ENCODE measurements at regions of chr22 and their contacts with region 1.

Region 1: DNA sequence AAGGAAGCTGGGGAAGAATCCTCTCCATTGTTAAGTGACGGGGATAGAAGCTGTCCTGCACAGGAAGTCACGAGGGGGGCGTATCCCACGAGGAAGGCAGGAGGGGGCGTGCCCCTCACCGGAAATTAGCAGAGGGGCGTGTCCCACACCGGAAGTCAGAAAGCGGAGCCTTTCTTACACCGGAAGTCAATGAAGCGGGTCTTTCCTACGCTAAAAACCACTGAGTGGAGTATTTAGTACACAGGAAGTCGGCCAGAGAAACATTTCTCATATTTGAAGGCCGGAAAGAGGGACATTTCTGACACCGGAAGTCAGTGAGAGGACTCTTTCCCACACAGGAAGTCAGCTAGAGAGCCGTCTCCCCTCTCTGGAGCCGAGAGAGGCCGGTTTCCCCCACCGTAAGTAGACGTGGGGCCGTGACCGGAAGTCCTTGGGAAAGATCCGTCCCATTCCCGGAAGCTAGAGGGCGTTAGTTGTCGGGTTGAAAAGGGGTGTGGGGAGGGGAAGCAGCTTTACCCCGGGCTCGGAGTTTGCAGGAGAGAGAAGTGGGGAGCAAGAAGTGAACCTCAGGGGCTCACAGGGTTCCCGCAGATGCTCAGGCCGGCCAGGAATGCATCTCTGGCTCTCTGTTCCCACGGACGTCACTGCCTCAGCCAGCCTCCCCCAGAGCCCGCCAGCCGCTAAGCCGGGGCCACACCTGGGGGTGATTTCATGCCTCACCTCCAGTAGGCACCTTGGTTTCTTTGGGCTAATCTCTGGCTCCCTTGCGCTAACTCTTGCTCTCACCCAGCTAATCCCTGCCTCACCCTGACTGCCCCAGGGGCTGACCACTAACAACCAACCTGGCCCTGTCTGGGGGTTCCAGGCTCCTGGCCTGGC is 15.4 kb downstream of the MIAT start:
- DNase-seq: peak; percentile 82
- ATAC-seq: peak; percentile 67
- H3K4me3 Mint-ChIP-seq: peak overlapping the region; percentile 98
- H3K27ac Mint-ChIP-seq: peak overlapping the region; percentile 99
- H3K4me1 Mint-ChIP-seq: peaks cover 92% of the 10 kb centered on the region
- H3K27me3 Mint-ChIP-seq: no peaks in the 10 kb centered on the region
- CTCF ChIP-seq: no peak

Region 2: GRCh38 chr22:26295563-26296126 is 377.2 kb before region 1 on chr22:
- CTCF ChIA-PET with region 1: no interaction called
- POLR2A ChIA-PET with region 1: interaction called, 5 read pairs
- intact Hi-C with region 1: loop called (anchors 2 kb)
- DNase-seq: no peak
- ATAC-seq: no peak
- H3K4me3 Mint-ChIP-seq: no peak overlapping the region
- H3K27ac Mint-ChIP-seq: peak overlapping the region; percentile 24
- H3K4me1 Mint-ChIP-seq: peaks cover 14% of the 10 kb centered on the region
- H3K27me3 Mint-ChIP-seq: peaks cover 2% of the 10 kb centered on the region
- CTCF ChIP-seq: no peak

Region 3: GRCh38 chr22:26511857-26512793 is 160.7 kb before region 1 on chr22 and contains the start of gene TFIP11:
- CTCF ChIA-PET with region 1: no interaction called
- POLR2A ChIA-PET with region 1: interaction called, 8 read pairs
- intact Hi-C with region 1: loop called (anchors 1 kb)
- DNase-seq: peak; percentile 89
- ATAC-seq: peak; percentile 94
- H3K4me3 Mint-ChIP-seq: peak within 1 kb of the TSS; percentile 100
- H3K27ac Mint-ChIP-seq: peak within 1 kb of the TSS; percentile 96
- H3K4me1 Mint-ChIP-seq: peaks cover 39% of the 10 kb centered on the region
- H3K27me3 Mint-ChIP-seq: no peaks in the 10 kb centered on the region
- CTCF ChIP-seq: no peak
- total RNA-seq, gene TFIP11: 59.0 and 62.8 TPM in 2 replicates

Region 4: DNA sequence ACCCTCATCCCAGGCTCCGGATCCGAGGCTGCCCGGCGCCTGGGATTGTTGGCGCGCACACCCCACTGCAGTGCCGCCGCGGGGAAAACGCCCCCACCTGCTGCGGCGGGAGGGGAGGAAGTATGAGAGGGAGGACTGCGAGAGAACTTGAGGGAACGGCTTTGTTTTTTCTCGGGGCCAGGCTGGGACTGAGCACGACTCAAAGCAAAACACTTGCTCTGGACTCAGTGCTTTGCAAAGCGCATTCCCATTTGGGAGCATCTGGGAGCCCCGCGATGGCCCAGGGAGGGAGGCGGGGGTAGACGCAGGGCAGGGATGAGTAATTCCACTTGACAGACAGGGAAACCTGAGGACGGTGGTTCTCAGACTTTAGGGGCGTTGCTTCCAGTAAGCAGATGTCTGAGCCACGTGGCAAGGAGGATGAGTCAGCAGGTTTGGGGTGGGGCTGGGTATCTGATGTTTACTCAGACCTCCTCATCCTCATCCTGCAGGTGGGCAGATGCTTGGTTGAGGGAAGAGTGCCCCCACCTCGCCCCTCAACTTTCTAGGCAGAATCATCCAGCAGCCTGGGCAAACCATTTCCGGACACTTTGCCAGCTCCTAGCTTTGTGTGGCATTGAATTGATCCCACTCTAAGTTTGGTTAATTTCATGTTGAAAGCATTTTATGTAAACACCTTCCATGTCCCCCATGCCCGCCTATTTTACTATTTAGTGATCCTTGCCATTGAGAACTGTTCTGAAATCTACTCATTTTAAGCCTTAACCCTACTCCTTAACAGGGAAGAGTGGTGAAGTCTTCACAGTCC is 14.0 kb before region 1 on chr22:
- CTCF ChIA-PET with region 1: interaction called, 3 read pairs
- POLR2A ChIA-PET with region 1: interaction called, 12 read pairs
- intact Hi-C with region 1: loop called (anchors 2 kb)
- DNase-seq: peak; percentile 30
- ATAC-seq: peak; percentile 77
- H3K4me3 Mint-ChIP-seq: peak overlapping the region; percentile 89
- H3K27ac Mint-ChIP-seq: peak overlapping the region; percentile 69
- H3K4me1 Mint-ChIP-seq: peaks cover 31% of the 10 kb centered on the region
- H3K27me3 Mint-ChIP-seq: peaks cover 8% of the 10 kb centered on the region
- CTCF ChIP-seq: no peak

Region 5: GRCh38 chr22:27919222-27919941 is 1246.6 kb after region 1 on chr22 and contains the start of gene PITPNB:
- CTCF ChIA-PET with region 1: no interaction called
- POLR2A ChIA-PET with region 1: interaction called, 8 read pairs
- intact Hi-C with region 1: loop called (anchors 2 kb)
- DNase-seq: peak; percentile 99
- ATAC-seq: peak; percentile 83
- H3K4me3 Mint-ChIP-seq: peak within 1 kb of the TSS; percentile 99
- H3K27ac Mint-ChIP-seq: peak within 1 kb of the TSS; percentile 99
- H3K4me1 Mint-ChIP-seq: peaks cover 56% of the 10 kb centered on the region
- H3K27me3 Mint-ChIP-seq: no peaks in the 10 kb centered on the region
- CTCF ChIP-seq: no peak
- total RNA-seq, gene PITPNB: 77.1 and 82.5 TPM in 2 replicates

Measured in activated B cell treated with CpG ODN at 0.5 μM for 24 hours (primary cell).